Activated naive CD4-positive, alpha-beta T cell treated with anti-CD3 and anti-CD28 coated beads for 36 hours (primary cell): ENCODE measurements at regions of chr2 and their contacts with region 1.

Region 1: GRCh38 chr2:204177977-204178540 is 241.5 kb downstream of the ICOS start:
- DNase-seq: peak; percentile 88
- H3K4me3 Mint-ChIP-seq: no peak overlapping the region
- H3K27ac Mint-ChIP-seq: no peak overlapping the region
- H3K4me1 Mint-ChIP-seq: no peaks in the 10 kb centered on the region
- H3K27me3 Mint-ChIP-seq: peaks cover 5% of the 10 kb centered on the region

Region 2: GRCh38 chr2:203928849-203929248 is 249.2 kb before region 1 on chr2:
- CTCF ChIA-PET with region 1: interaction called, 4 read pairs
- intact Hi-C with region 1: loop called (anchors 1 kb)
- DNase-seq: no peak
- H3K4me3 Mint-ChIP-seq: no peak overlapping the region
- H3K27ac Mint-ChIP-seq: no peak overlapping the region
- H3K4me1 Mint-ChIP-seq: peaks cover 43% of the 10 kb centered on the region
- H3K27me3 Mint-ChIP-seq: no peaks in the 10 kb centered on the region

Region 3: GRCh38 chr2:204140246-204140645 is 37.8 kb before region 1 on chr2:
- CTCF ChIA-PET with region 1: interaction called, 38 read pairs
- intact Hi-C with region 1: loop called (anchors 1 kb)
- DNase-seq: no peak
- H3K4me3 Mint-ChIP-seq: no peak overlapping the region
- H3K27ac Mint-ChIP-seq: no peak overlapping the region
- H3K4me1 Mint-ChIP-seq: no peaks in the 10 kb centered on the region
- H3K27me3 Mint-ChIP-seq: peaks cover 2% of the 10 kb centered on the region

Region 4: DNA sequence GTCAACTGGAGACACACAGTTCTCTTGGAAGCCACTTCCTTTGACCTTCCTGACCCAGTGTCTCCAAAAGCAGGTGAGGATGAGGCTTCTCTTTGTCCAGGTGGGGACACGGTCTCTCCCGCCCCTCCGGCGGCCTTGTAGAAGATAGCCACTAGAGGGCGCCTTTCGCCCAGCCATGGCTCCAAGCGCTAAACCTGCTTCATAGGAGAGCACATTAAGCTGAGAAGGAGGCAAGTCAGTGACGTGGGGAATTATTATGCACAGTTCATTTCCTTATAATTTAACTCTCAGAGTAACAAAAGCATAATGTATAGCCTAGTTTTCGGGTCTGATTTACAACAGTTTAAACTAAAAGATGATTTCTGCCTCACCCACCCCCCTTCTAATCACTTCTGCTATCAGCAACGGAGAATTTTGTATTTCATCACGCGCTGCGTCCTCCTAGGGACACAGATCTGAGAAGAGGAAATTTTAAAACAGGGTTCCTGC is 32.8 kb before region 1 on chr2:
- CTCF ChIA-PET with region 1: interaction called, 38 read pairs
- intact Hi-C with region 1: loop called (anchors 1 kb)
- DNase-seq: peak; percentile 90
- H3K4me3 Mint-ChIP-seq: peak overlapping the region; percentile 65
- H3K27ac Mint-ChIP-seq: peak overlapping the region; percentile 22
- H3K4me1 Mint-ChIP-seq: peaks cover 9% of the 10 kb centered on the region
- H3K27me3 Mint-ChIP-seq: peaks cover 5% of the 10 kb centered on the region

Region 5: GRCh38 chr2:204152616-204153015 is 25.4 kb before region 1 on chr2:
- CTCF ChIA-PET with region 1: interaction called, 20 read pairs
- intact Hi-C with region 1: no loop called
- DNase-seq: no peak
- H3K4me3 Mint-ChIP-seq: no peak overlapping the region
- H3K27ac Mint-ChIP-seq: no peak overlapping the region
- H3K4me1 Mint-ChIP-seq: no peaks in the 10 kb centered on the region
- H3K27me3 Mint-ChIP-seq: peaks cover 3% of the 10 kb centered on the region

Region 6: GRCh38 chr2:204268458-204268857 is 90.4 kb after region 1 on chr2:
- CTCF ChIA-PET with region 1: no interaction called
- intact Hi-C with region 1: no loop called
- DNase-seq: no peak
- H3K4me3 Mint-ChIP-seq: no peak overlapping the region
- H3K27ac Mint-ChIP-seq: no peak overlapping the region
- H3K4me1 Mint-ChIP-seq: no peaks in the 10 kb centered on the region
- H3K27me3 Mint-ChIP-seq: peaks cover 10% of the 10 kb centered on the region